ENCODE measurements at regions of chr4 and their contacts with region 1.

Region 1: DNA sequence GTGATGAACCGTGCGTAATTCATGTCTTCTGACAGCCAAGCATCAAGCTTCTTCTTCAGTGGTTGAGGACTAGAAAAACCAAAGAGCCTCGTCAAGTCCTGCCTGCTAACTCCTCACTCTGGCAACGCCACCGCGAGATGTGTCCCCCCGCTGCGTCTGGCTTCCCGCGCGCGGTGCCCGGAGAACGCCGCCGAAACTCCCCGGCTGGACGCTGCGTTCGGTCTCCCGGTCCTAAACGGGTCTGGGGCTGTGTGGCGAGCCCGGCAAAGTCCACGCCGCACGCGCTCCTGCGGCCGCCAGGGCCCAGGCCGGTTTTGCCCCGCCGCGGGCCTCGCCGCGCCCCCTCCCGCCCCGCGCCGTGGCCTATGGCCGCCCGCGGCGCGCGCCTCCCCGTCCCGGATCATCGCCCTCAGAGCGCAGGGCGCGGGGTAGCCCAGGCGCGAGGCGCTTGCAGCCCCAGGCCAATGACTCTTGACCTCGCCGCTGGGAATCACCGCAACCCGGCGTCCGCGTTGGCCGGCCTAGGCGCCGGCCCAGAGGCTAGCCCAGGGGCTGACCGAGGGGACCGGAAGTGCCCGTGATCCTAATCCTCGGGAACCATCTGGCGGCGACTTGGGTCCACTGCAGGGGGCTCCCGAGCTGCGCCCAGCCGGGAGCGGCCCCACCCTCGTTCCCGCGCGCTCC is at the start of gene AADAT:
- DNase-seq: peak; percentile 27 to 89 (median 78)
- H3K4me3 ChIP-seq: peak within 1 kb of the TSS; percentile 51 to 84 (median 73)
- H3K27ac ChIP-seq: peak within 1 kb of the TSS in 57 of 59 donors; percentile 10 to 91 (median 79)
- H3K27me3 ChIP-seq: no peaks in the 10 kb centered on the region
- CTCF ChIP-seq: peak; percentile 38 to 93 (median 78)
- total RNA-seq, gene AADAT: 11.1 to 25.5 (median 16.1) TPM

Region 2: GRCh38 chr4:169024762-169025161 is 1065.0 kb before region 1 on chr4:
- intact Hi-C with region 1: loop called in 1 of 2 experiments (anchors 10 kb)
- DNase-seq: no peak
- H3K4me3 ChIP-seq: no peak overlapping the region
- H3K27ac ChIP-seq: no peak overlapping the region
- H3K27me3 ChIP-seq: no peaks in the 10 kb centered on the region
- CTCF ChIP-seq: peak in 55 of 56 donors; percentile 43 to 85 (median 65)

Region 3: GRCh38 chr4:169612871-169613859 is 476.6 kb before region 1 on chr4:
- intact Hi-C with region 1: loop called (anchors 2 to 10 kb)
- DNase-seq: peak; percentile 65 to 87 (median 80)
- H3K4me3 ChIP-seq: peak overlapping the region; percentile 56 to 97 (median 87)
- H3K27ac ChIP-seq: peak overlapping the region in 58 of 59 donors; percentile 34 to 99 (median 91)
- H3K27me3 ChIP-seq: no peaks in the 10 kb centered on the region
- CTCF ChIP-seq: peak; percentile 35 to 86 (median 80)

Region 4: DNA sequence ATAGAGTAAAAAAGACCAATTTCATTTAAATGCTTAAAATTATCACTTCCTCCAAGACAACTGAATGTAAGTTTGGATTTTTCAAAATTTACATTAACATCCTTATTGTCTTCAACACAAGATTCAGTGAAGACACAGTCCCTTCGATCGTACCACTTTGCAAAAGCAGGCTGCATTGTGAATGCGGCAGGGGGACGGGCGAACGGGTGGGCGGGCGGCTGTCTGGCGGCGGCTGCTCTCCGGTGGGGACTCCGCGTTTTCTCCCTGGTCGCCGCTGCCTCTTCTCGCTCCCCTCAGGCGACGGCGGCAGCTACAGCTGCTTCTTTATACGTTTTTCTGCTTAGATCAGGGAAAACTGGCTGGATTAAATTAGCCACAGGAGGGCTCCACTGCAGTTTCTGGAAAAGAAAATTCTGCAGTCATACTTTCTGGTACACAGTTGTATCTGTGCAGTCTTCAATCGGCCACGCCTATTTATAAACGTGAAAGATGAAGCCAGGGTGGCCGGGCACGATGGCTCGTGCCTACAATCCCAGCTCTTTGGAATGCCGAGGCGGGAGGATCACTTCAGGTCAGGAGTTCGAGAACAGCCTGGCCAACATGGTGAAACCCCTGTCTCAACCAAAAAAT is 298.2 kb before region 1 on chr4:
- intact Hi-C with region 1: loop called in 1 of 2 experiments (anchors 5 kb)
- DNase-seq: peak in 9 of 10 donors; percentile 21 to 75 (median 67)
- H3K4me3 ChIP-seq: peak overlapping the region; percentile 8 to 71 (median 50)
- H3K27ac ChIP-seq: peak overlapping the region in 52 of 59 donors; percentile 2 to 82 (median 55)
- H3K27me3 ChIP-seq: no peaks in the 10 kb centered on the region
- CTCF ChIP-seq: peak; percentile 49 to 81 (median 70)

Region 5: GRCh38 chr4:170352231-170352630 is 262.4 kb after region 1 on chr4:
- intact Hi-C with region 1: no loop called
- DNase-seq: no peak
- H3K4me3 ChIP-seq: no peak overlapping the region
- H3K27ac ChIP-seq: no peak overlapping the region
- H3K27me3 ChIP-seq: no peaks in the 10 kb centered on the region
- CTCF ChIP-seq: no peak

Measured in dorsolateral prefrontal cortex (tissue), 120 donors.